ENCODE measurements at regions of chr19 and their contacts with region 1.

Region 1: GRCh38 chr19:18388100-18388959 is 2.4 kb downstream of the GDF15 start:
- DNase-seq: peak; percentile 54 to 83 (median 68)
- H3K4me3 ChIP-seq: peak overlapping the region; percentile 5 to 65 (median 44)
- H3K27ac ChIP-seq: peak overlapping the region in 23 of 59 donors; percentile 11 to 81 (median 36)
- H3K27me3 ChIP-seq: peaks cover 0 to 16% (median 0%) of the 10 kb centered on the region in 45 donors
- CTCF ChIP-seq: peak; percentile 78 to 100 (median 98)

Region 2: GRCh38 chr19:18340190-18340989 is 47.9 kb before region 1 on chr19 and contains the start of gene PGPEP1:
- intact Hi-C with region 1: loop called in 1 of 2 experiments (anchors 5 kb)
- DNase-seq: peak; percentile 41 to 91 (median 64)
- H3K4me3 ChIP-seq: peak within 1 kb of the TSS; percentile 67 to 99 (median 89)
- H3K27ac ChIP-seq: peak within 1 kb of the TSS in 57 of 59 donors; percentile 24 to 92 (median 78)
- H3K27me3 ChIP-seq: no peaks in the 10 kb centered on the region
- CTCF ChIP-seq: peak in 6 of 56 donors; percentile 9 to 27 (median 18)
- total RNA-seq, gene PGPEP1: 20.4 to 93.6 (median 37.7) TPM

Region 3: DNA sequence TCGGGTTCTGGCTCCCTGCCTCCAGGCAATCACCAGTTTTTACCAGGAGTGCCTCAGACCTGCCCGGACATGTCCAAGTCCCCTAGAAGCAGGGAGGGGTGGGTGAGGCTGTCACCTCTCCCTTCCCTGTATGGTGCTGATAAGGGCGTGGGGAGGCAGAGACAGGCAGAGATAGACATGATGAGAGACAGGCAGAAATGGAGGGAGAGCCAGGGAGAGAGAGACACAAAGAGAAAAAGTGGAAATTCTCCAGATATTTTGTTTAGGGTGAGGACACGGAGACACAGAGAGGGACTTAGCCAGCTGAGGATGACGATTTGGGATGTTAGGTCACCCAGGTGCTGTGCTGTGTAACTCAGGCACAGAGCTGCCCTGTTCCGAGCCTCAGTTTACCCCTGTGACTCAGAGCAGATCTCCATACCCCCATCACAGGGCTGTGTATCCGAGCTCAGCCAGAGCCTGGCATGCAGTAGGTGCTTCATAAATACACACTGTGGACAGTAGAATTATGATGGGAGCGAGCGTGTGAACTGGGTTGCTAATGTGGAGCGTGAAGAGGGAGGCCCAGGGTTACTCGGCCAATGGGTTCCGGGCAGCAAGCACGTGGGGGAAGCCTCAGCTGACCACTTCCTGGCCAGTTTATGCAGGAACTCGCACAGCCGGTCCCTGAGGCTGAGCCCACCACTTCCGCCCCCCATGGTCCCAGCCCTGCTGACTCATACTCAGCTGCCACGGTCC is 14.3 kb before region 1 on chr19:
- intact Hi-C with region 1: no loop called
- DNase-seq: peak in 8 of 10 donors; percentile 45 to 90 (median 71)
- H3K4me3 ChIP-seq: peak overlapping the region in 16 of 59 donors; percentile 0 to 31 (median 16)
- H3K27ac ChIP-seq: peak overlapping the region in 55 of 59 donors; percentile 40 to 90 (median 69)
- H3K27me3 ChIP-seq: no peaks in the 10 kb centered on the region
- CTCF ChIP-seq: peak in 1 of 56 donors; percentile 14

Region 4: DNA sequence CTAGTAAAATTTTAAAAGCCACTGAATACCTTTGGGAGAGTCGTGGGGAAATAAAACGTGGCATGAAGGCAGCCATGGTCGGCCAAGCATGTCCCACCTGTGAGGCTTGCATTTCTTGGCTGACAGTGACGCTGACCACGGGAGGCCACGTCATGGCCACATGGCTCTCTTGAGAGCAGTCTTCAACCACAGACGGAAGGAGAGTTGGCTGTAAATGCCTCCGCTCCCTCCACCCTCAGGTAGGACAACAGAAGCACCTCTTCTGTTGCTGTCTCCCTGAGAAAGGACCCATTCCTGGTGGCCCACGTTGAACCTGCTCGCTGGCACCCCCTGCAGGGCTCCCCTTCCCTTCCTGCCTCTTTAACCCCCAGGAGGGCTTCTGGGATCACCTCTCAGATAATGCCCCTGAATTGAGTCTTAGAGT is 19.7 kb after region 1 on chr19:
- intact Hi-C with region 1: loop called in 1 of 2 experiments (anchors 2 kb)
- DNase-seq: no peak
- H3K4me3 ChIP-seq: no peak overlapping the region
- H3K27ac ChIP-seq: no peak overlapping the region
- H3K27me3 ChIP-seq: no peaks in the 10 kb centered on the region
- CTCF ChIP-seq: peak in 34 of 56 donors; percentile 10 to 42 (median 23)

Measured in dorsolateral prefrontal cortex (tissue), 120 donors.